Activated naive CD4-positive, alpha-beta T cell treated with anti-CD3 and anti-CD28 coated beads for 36 hours (primary cell): ENCODE measurements at regions of chr11 and their contacts with region 1.

Region 1: DNA sequence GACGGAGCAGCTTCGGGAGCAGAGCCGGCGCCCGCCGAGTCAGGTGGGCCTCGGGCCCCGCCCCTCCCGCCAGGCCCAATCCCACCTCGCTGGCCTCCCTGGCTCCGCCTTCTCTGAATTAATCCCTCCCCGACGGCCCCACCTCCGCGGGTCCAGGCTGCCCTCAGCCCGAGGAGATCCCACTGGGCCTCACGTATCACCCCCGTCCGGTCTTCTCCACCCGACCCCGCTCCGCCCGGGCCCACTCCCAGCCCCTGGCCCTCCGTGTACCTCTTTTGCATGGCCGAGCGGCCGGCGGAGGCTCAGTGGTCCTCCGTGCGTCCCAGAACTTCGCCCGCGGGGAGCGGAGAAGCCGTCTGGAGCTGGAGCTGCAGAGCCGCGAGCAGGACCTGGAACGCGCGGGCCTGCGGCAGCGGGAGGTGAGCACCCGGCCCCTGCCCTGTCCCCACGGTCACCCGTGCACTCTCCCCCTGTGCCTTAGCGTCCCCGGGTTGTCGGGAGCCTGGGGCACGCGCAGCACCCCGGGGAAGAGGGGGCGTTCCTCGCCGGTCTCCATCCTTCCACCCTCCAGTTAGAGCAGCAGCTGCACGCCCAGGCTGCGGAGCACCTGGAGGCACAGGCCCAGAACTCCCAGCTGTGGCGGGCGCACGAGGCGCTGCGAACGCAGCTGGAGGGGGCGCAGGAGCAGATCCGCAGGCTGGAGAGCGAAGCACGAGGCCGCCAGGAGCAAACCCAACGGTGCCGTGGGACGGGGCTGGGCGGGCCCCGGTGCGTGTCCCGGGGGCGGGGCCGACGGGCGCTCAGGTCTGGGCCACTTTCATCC is 2.2 kb upstream of the CD151 start:
- DNase-seq: no peak
- H3K4me3 Mint-ChIP-seq: peak overlapping the region; percentile 29
- H3K27ac Mint-ChIP-seq: no peak overlapping the region
- H3K4me1 Mint-ChIP-seq: peaks cover 40% of the 10 kb centered on the region
- H3K27me3 Mint-ChIP-seq: peaks cover 45% of the 10 kb centered on the region

Region 2: DNA sequence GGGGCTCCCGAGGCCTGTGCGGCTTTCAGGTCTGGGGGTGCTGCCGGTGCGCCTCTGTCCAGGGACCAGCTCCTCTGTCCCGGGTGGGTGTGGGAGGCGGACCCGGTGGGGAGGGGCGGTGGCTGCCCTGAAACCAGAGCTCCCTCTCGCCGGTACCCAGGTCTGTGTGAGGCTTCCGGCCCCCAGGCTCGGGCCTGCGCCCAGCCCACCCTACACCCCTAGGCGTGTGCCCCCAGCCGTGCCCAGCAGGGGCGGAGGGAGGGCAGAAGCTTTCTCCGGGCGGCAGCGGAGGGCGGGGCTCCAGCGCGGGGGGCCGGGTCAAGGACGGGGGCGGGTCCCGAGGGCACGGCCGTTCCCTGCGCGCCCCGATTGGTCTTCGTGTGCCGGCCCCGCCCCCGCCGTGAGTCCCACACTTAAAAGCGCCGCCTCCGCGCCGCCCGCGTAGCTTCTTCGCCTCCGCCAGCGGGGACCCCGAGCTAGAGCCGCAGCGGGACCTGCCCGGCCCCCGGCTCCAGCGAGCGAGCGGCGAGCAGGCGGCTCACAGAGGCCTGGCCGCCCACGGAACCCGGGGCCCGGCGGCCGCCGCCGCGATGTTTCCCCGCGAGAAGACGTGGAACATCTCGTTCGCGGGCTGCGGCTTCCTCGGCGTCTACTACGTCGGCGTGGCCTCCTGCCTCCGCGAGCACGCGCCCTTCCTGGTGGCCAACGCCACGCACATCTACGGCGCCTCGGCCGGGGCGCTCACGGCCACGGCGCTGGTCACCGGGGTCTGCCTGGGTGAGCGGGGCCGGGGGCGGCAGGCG is 11.2 kb before region 1 on chr11:
- CTCF ChIA-PET with region 1: interaction called, 3 read pairs
- intact Hi-C with region 1: loop called (anchors 1 kb)
- DNase-seq: peak; percentile 89
- H3K4me3 Mint-ChIP-seq: peak overlapping the region; percentile 75
- H3K27ac Mint-ChIP-seq: no peak overlapping the region
- H3K4me1 Mint-ChIP-seq: peaks cover 13% of the 10 kb centered on the region
- H3K27me3 Mint-ChIP-seq: no peaks in the 10 kb centered on the region

Region 3: GRCh38 chr11:842370-843002 is 12.0 kb after region 1 on chr11 and contains the starts of genes POLR2L and TSPAN4:
- CTCF ChIA-PET with region 1: no interaction called
- intact Hi-C with region 1: no loop called
- DNase-seq: peak; percentile 88
- H3K4me3 Mint-ChIP-seq: peak within 1 kb of the TSS; percentile 84
- H3K27ac Mint-ChIP-seq: peak within 1 kb of the TSS; percentile 75
- H3K4me1 Mint-ChIP-seq: peaks cover 27% of the 10 kb centered on the region
- H3K27me3 Mint-ChIP-seq: no peaks in the 10 kb centered on the region
- total RNA-seq, gene POLR2L: 68.1 to 68.2 TPM
- total RNA-seq, gene TSPAN4: 5.0 to 6.3 TPM

Region 4: DNA sequence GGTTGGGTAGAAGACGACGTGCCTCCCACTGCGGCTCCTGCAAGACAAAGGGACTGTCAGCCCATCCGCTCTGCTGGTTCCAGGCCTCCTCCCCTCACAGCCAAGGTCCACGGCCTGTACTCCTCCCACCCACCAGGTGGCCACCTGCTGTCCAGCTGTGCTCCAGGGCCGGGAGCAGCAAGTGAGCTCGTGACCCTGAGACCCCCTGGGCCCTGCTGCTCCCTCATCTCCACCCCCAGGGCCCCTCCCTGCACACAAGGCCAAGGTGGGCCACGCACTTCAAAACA is 39.6 kb after region 1 on chr11:
- CTCF ChIA-PET with region 1: no interaction called
- intact Hi-C with region 1: no loop called
- DNase-seq: no peak
- H3K4me3 Mint-ChIP-seq: no peak overlapping the region
- H3K27ac Mint-ChIP-seq: no peak overlapping the region
- H3K4me1 Mint-ChIP-seq: no peaks in the 10 kb centered on the region
- H3K27me3 Mint-ChIP-seq: no peaks in the 10 kb centered on the region